Left ventricle myocardium inferior (tissue), 1 donor: ENCODE measurements at regions of chr2 and their contacts with region 1.

Region 1: DNA sequence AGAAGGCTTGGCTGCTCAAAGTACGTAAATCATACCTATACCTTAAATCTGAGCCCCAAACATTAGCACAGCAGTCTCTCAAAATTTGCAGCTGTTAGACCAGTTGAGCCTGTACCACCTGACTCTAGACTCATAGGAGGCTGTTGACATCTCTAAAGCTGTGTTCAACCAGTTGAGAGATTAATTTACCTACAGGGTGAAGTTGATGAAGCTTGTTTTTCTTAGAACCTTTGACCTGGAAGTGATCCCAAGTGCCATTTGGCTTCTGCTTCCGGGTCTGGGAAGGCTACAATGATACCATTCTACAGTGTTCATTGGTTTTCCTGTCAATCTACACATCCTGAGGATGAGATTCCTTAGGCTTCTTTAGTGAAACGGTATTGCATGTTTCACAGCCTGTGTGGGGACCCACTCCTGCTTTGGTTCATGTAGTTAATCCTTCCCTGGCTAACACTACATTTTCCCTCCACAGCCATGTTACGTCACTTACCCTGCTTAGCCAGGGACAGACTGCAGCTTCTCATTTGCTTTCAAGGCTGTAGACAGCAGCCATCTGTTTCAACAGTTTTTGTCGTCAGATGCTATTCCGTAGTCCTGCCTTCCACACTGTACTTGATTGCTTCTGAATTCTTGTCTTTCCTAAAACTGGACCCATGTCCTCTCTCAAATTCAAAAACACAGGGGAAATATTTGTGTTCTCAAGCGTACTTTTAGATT is 4.7 kb upstream of the IL1RL2 start:
- DNase-seq: no peak
- H3K4me3 ChIP-seq: no peak overlapping the region
- H3K27ac ChIP-seq: no peak overlapping the region
- H3K4me1 ChIP-seq: peaks cover 13% of the 10 kb centered on the region
- H3K27me3 ChIP-seq: peaks cover 16% of the 10 kb centered on the region
- CTCF ChIP-seq: no peak

Region 2: GRCh38 chr2:102240640-102241370 is 58.7 kb after region 1 on chr2:
- intact Hi-C with region 1: loop called (anchors 5 kb)
- DNase-seq: peak; percentile 91
- H3K4me3 ChIP-seq: peak overlapping the region; percentile 36
- H3K27ac ChIP-seq: peak overlapping the region; percentile 88
- H3K4me1 ChIP-seq: peaks cover 31% of the 10 kb centered on the region
- H3K27me3 ChIP-seq: peaks cover 7% of the 10 kb centered on the region
- CTCF ChIP-seq: peak; percentile 99

Region 3: DNA sequence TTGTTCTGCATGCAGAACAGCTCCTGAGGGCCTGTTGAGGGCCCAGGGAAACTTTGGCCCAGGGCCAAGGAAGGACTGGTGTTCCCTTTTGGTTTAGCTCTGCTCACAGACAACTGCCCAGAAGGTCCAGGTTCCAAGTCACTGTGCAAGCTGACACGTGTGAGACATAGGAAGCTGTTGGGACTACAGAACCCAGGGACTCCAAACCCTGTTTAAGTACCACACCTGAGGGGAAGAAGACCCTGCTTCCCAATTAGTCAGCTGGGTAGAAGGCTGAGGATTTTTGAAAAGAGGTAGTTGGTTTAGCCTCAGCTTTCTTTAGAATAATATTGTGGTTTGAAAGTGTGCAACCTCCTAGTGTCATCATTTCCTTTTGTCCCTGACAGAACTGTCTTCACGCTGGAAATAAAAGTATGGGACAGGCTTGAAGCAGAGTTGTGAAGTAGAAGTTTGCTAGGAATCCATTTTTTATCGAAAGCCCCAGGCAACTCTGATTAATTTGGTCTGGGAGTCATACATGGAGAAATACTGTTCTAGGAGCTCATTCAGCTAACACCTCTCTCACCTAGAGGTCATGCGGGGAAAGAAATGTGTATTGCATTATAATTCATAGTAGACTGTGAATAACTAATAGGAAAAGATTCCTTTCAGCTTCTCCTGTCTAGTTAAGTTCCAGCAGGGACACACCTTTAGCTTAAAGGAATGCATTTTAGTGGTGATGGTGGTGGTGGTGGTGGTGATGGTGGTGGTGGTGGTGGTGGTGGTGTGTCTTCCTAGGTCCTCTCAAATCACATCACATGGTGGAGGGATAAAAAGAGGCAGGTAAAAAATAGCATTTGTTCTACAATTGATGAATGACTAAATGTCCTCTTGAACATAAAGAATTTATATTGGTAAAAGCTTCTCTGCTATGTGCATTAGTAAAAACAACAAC is 109.5 kb after region 1 on chr2:
- intact Hi-C with region 1: no loop called
- DNase-seq: peak; percentile 25
- H3K4me3 ChIP-seq: no peak overlapping the region
- H3K27ac ChIP-seq: no peak overlapping the region
- H3K4me1 ChIP-seq: no peaks in the 10 kb centered on the region
- H3K27me3 ChIP-seq: peaks cover 13% of the 10 kb centered on the region
- CTCF ChIP-seq: no peak